ENCODE measurements at regions of chr16 and their contacts with region 1.

Region 1: DNA sequence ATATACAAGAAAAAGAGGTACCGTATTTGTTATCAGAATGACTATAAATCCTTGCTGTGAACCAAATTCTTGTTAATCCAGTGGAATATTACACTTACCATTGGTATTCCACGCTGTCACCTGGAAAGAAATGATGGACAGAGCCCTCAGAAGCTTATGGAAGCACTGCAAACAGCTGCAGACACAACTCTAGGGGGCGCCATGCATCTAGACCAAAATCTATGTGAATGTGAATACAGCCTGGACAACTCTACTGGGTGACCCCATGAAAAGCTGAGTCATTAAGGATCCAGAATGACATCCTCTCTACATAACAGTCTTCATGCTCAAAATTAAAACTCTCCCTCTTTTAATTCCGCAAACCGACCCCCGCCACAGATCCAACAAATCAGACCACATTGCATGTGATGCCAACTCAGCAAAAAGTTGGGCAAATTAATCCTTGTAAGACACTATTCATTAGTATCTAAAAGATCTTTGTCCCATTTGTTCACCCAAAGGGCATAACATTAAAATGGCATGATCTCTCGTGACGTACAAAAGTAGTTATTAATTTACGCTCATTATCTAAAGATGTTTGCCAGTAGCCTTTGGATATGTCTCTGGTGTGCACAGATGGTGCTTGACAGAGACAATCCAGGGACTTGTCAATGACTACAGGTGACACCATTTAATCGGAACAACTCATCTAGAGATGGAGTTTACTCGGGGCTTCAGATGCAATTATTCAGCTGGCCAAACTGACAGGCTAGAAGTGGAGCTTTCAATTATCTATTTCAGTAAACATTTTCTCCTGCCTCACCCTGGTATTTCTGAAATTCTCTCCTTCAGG is 552.7 kb upstream of the PSMD7 start:
- DNase-seq: peak; percentile 44
- H3K4me3 ChIP-seq: no peak overlapping the region
- H3K27ac ChIP-seq: no peak overlapping the region
- H3K4me1 ChIP-seq: peaks cover 0 to 9% of the 10 kb centered on the region in 2 experiments; a peak in 2 of 4 replicates
- H3K27me3 ChIP-seq: no peaks in the 10 kb centered on the region
- CTCF ChIP-seq: peak; percentile 17; the same call in 1 of the 2 replicates
- EP300 ChIP-seq: peak in 1 of 2 experiments; percentile 94; a peak in 2 of 4 replicates
- RAD21 ChIP-seq: peak; percentile 75

Region 2: GRCh38 chr16:73546349-73546845 is 197.5 kb before region 1 on chr16:
- CTCF ChIA-PET with region 1: no interaction called
- POLR2A ChIA-PET with region 1: no interaction called
- DNase-seq: peak; percentile 71
- H3K4me3 ChIP-seq: peak overlapping the region in 1 of 2 experiments; percentile 31; a peak in 2 of 4 replicates
- H3K27ac ChIP-seq: peak overlapping the region in 1 of 2 experiments; percentile 24; a peak in 2 of 4 replicates
- H3K4me1 ChIP-seq: peaks cover 0 to 14% of the 10 kb centered on the region in 2 experiments; a peak in 2 of 4 replicates
- H3K27me3 ChIP-seq: no peaks in the 10 kb centered on the region; the same call in 1 of the 2 replicates
- CTCF ChIP-seq: no peak
- EP300 ChIP-seq: no peak
- RAD21 ChIP-seq: no peak

Region 3: GRCh38 chr16:73713778-73714495 is 29.9 kb before region 1 on chr16:
- CTCF ChIA-PET with region 1: interaction called, 15 read pairs
- POLR2A ChIA-PET with region 1: interaction called, 3 read pairs
- DNase-seq: peak; percentile 37
- H3K4me3 ChIP-seq: no peak overlapping the region
- H3K27ac ChIP-seq: no peak overlapping the region
- H3K4me1 ChIP-seq: no peaks in the 10 kb centered on the region; a peak in 1 of 4 replicates
- H3K27me3 ChIP-seq: no peaks in the 10 kb centered on the region
- CTCF ChIP-seq: peak; percentile 41
- EP300 ChIP-seq: no peak
- RAD21 ChIP-seq: peak; percentile 56

Region 4: DNA sequence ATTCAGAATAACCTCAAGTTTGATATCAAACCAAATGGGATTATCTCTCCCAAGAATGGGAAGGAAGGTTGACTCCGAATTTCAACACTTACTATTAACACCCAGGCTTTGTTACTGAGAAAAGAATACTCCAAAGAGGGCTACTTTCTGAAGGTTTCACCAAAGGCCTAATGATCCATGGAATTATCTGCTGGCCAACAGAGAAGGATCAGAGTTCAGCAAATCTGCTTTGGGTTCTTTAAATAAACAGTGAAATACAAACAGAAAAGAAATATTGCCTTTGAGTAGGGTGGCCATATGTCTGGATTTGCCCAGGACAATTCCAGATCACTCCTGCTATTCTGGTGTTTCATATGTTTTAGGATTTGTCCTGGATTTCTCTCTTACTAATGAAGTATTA is 11.7 kb before region 1 on chr16:
- CTCF ChIA-PET with region 1: interaction called, 11 read pairs
- POLR2A ChIA-PET with region 1: no interaction called
- DNase-seq: no peak
- H3K4me3 ChIP-seq: no peak overlapping the region
- H3K27ac ChIP-seq: no peak overlapping the region
- H3K4me1 ChIP-seq: no peaks in the 10 kb centered on the region
- H3K27me3 ChIP-seq: no peaks in the 10 kb centered on the region
- CTCF ChIP-seq: no peak
- EP300 ChIP-seq: no peak
- RAD21 ChIP-seq: no peak

Region 5: GRCh38 chr16:73753931-73754330 is 10.1 kb after region 1 on chr16:
- CTCF ChIA-PET with region 1: interaction called, 15 read pairs
- POLR2A ChIA-PET with region 1: no interaction called
- DNase-seq: no peak
- H3K4me3 ChIP-seq: no peak overlapping the region
- H3K27ac ChIP-seq: no peak overlapping the region
- H3K4me1 ChIP-seq: no peaks in the 10 kb centered on the region; a peak in 1 of 4 replicates
- H3K27me3 ChIP-seq: no peaks in the 10 kb centered on the region
- CTCF ChIP-seq: no peak
- EP300 ChIP-seq: no peak
- RAD21 ChIP-seq: no peak

Region 6: DNA sequence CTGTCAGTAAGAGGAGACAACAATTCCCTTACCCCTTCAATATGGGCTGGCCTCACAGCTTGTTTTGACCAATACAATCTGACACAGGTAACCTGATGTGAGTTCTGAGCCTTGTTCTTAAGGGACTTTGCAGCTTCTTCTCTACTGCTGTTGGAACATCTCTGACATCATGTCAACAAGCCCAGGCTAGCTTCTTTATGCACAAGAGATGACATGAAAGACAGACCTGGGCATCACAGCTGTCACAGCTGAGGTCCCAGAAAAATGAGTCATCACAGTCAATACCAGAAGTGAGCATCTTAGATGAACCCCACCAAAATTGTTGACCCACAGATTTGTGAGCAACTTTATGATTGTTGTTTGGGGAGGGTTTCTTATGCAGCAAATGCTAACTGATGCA is 121.0 kb after region 1 on chr16:
- CTCF ChIA-PET with region 1: interaction called, 11 read pairs
- POLR2A ChIA-PET with region 1: no interaction called
- DNase-seq: no peak
- H3K4me3 ChIP-seq: no peak overlapping the region
- H3K27ac ChIP-seq: no peak overlapping the region
- H3K4me1 ChIP-seq: no peaks in the 10 kb centered on the region
- H3K27me3 ChIP-seq: no peaks in the 10 kb centered on the region
- CTCF ChIP-seq: no peak
- EP300 ChIP-seq: no peak
- RAD21 ChIP-seq: no peak

Region 7: DNA sequence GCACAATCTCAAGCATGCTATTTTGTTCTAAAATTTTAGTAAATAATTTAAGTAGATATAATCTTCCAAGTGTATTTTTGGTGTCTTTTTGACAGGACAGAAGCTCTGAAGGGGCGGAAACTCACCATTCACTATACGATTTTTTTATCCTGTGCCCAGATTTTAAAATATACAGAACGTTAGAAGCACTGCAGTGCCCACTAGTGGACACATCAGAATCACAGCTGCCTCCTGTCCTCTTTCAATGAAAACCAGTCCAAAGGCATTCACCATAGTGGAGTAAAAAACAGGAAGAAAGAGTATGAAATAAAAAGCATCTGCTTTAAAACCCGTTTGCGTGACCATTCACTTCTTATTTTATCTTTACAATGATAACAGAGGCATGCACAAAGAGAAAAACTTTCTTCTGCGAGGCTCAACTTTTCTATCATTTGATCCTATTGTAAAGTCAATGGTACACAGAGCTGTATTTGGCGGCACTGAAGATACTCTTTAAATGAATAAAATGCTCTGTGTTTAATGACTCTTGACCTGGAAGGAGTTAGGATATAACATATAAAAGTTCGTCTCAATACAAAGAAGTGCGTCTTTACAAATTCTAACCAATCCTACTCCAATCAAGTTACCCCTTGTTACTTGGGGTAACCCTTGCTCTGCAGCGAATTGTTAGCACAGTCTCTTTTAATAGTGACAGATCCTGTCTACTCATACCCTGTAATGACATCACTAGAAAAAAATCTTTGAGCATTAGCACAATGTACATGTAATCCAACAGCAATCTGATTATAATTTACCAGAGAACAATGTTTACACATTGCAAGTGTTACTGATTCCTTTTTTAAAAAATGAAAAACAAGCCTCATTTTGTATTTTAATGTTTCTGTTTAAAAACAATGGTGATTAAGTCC is 213.0 kb after region 1 on chr16:
- CTCF ChIA-PET with region 1: interaction called, 33 read pairs
- POLR2A ChIA-PET with region 1: no interaction called
- DNase-seq: peak; percentile 65
- H3K4me3 ChIP-seq: no peak overlapping the region
- H3K27ac ChIP-seq: no peak overlapping the region
- H3K4me1 ChIP-seq: no peaks in the 10 kb centered on the region; a peak in 2 of 4 replicates
- H3K27me3 ChIP-seq: no peaks in the 10 kb centered on the region
- CTCF ChIP-seq: peak; percentile 95
- EP300 ChIP-seq: no peak
- RAD21 ChIP-seq: peak; percentile 91

Measured in SK-N-SH (cell line).